ENCODE measurements at regions of chr11 and their contacts with region 1.

Region 1: GRCh38 chr11:30526558-30526957 is 59.6 kb downstream of the MPPED2 start:
- DNase-seq: no peak
- ATAC-seq: no peak

Region 2: GRCh38 chr11:30499940-30500339 is 26.6 kb before region 1 on chr11:
- intact Hi-C with region 1: loop called (anchors 1 kb)
- DNase-seq: no peak
- ATAC-seq: peak; percentile 26